ENCODE measurements at regions of chr19 and their contacts with region 1.

Region 1: GRCh38 chr19:933216-933882 is 7.5 kb downstream of the ARID3A start:
- DNase-seq: no peak
- ATAC-seq: peak; percentile 41
- H3K4me3 ChIP-seq: peak overlapping the region in 1 of 3 experiments; percentile 37; a peak in 1 of 6 replicates
- H3K27ac ChIP-seq: peak overlapping the region; percentile 55
- H3K4me1 ChIP-seq: peaks cover 92% of the 10 kb centered on the region
- H3K27me3 ChIP-seq: no peaks in the 10 kb centered on the region
- CTCF ChIP-seq: peak; percentile 35
- EP300 ChIP-seq: no peak
- POLR2A ChIP-seq: no peak; a peak in 1 of 4 replicates
- RAD21 ChIP-seq: no peak

Region 2: DNA sequence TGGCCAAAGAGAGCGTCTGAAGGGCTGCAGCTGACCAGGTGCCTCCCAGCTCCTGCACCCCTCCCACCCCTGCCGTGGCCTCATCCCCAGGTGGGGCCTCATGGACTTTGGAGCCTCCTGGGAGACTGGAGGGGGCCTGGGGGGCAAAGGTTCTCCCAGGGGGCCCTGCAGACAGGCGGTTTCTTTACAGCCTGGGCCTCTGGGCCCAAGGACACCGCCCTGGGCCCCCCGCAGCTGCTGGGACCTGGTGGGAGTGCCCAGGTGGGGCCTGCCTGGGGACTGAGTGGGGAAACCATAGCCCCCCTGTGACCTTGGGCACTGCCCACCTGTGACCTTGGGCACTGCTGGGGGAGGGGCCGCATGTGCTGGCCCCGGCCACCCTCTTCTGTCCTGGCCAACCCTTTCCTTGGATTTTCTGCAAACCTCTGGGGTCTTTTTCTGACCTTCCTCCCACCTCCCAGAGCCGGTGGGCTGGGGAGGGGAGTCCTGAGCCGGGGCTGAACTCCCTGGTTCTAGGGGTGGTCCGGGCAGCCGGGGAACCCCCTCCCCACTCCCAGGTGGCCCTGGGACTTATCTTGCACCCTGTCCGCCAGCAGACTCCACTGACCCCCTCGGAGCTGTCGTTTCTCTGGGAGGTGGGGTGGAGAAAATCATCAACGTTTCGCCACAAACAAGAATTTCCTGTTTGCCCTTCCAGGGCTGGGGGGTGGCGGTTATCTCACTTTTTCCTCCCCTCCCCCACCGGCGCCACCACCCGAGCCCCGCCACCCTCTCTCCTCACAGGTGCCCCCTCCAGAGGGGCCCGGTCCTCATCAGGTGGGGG is 19.5 kb after region 1 on chr19:
- CTCF ChIA-PET with region 1: no interaction called
- POLR2A ChIA-PET with region 1: interaction called, 50 read pairs
- in situ Hi-C with region 1: no loop called
- intact Hi-C with region 1: loop called (anchors 2 kb)
- DNase-seq: peak; percentile 95
- ATAC-seq: peak; percentile 82
- H3K4me3 ChIP-seq: peak overlapping the region; percentile 31 to 70 (median 36); a peak in 5 of 6 replicates
- H3K27ac ChIP-seq: peak overlapping the region; percentile 99
- H3K4me1 ChIP-seq: peaks cover 86% of the 10 kb centered on the region
- H3K27me3 ChIP-seq: no peaks in the 10 kb centered on the region
- CTCF ChIP-seq: peak; percentile 32; the same call in 1 of the 2 replicates
- EP300 ChIP-seq: peak; percentile 98 to 99
- POLR2A ChIP-seq: peak; percentile 55 to 59; a peak in 3 of 4 replicates
- RAD21 ChIP-seq: peak; percentile 82

Region 3: GRCh38 chr19:958967-959820 is 25.8 kb after region 1 on chr19:
- CTCF ChIA-PET with region 1: no interaction called
- POLR2A ChIA-PET with region 1: interaction called, 50 read pairs
- in situ Hi-C with region 1: loop called (anchors 5 kb)
- intact Hi-C with region 1: loop called (anchors 2 kb)
- DNase-seq: peak; percentile 59
- ATAC-seq: peak; percentile 3; the same call in 1 of the 3 replicates
- H3K4me3 ChIP-seq: peak overlapping the region in 1 of 3 experiments; percentile 30; a peak in 1 of 6 replicates
- H3K27ac ChIP-seq: peak overlapping the region; percentile 74
- H3K4me1 ChIP-seq: peaks cover 86% of the 10 kb centered on the region
- H3K27me3 ChIP-seq: no peaks in the 10 kb centered on the region
- CTCF ChIP-seq: no peak
- EP300 ChIP-seq: no peak
- POLR2A ChIP-seq: peak in 1 of 2 experiments; percentile 48; a peak in 1 of 4 replicates
- RAD21 ChIP-seq: no peak

Measured in HepG2 (cell line).